ENCODE measurements at regions of chr20 and their contacts with region 1.

Region 1: GRCh38 chr20:22511943-22512910 is 72.1 kb downstream of the FOXA2 start:
- DNase-seq: peak; percentile 99
- ATAC-seq: peak; percentile 93
- H3K4me3 ChIP-seq: peak overlapping the region; percentile 0 to 47 (median 27); a peak in 4 of 6 replicates
- H3K27ac ChIP-seq: peak overlapping the region; percentile 92
- H3K4me1 ChIP-seq: peaks cover 94% of the 10 kb centered on the region
- H3K27me3 ChIP-seq: no peaks in the 10 kb centered on the region
- CTCF ChIP-seq: peak; percentile 46
- EP300 ChIP-seq: peak; percentile 68 to 99; a peak in 3 of 4 replicates
- POLR2A ChIP-seq: peak; percentile 83 to 93
- RAD21 ChIP-seq: peak; percentile 63

Region 2: GRCh38 chr20:22346716-22347115 is 165.5 kb before region 1 on chr20:
- CTCF ChIA-PET with region 1: no interaction called
- POLR2A ChIA-PET with region 1: no interaction called
- in situ Hi-C with region 1: no loop called
- intact Hi-C with region 1: no loop called
- DNase-seq: peak; percentile 18
- ATAC-seq: peak; percentile 53; the same call in 2 of the 3 replicates
- H3K4me3 ChIP-seq: no peak overlapping the region
- H3K27ac ChIP-seq: no peak overlapping the region
- H3K4me1 ChIP-seq: no peaks in the 10 kb centered on the region
- H3K27me3 ChIP-seq: peaks cover 0 to 41% of the 10 kb centered on the region in 2 experiments; a peak in 3 of 5 replicates
- CTCF ChIP-seq: no peak
- EP300 ChIP-seq: no peak
- POLR2A ChIP-seq: no peak
- RAD21 ChIP-seq: no peak

Region 3: DNA sequence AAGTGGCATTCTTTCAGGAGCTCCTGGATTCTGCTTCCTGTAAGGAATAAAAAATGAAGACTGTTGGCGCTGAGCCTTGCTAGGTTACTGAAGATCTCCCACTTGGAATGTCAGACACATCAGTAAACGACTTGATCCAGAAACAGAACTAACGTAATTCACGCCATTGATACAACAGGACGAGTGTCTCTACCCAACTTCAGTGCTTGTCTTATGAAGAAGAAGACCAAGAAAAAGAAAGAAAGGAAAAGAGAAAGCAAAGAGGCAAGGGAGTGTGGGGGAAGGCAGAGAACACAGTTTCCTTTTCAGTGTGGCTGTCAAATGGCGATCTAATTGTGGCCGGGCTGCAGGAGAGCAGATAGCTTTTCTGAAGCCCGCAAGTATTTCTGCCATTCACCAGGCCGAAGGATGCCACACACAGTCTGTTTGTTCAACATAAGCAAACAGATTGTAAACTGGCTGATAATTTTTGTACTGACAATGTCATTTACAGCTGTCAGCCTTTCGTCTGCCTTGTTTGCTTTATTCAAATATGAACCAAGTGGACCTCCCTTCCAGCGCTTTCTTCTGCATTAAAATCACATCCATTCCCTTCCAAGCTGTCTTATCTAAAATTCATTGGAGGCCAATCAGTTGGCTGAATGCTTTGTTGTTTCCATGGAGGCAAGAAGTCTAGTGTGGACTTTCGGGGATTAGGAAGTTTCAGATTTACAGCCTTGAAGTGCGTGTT is 108.4 kb before region 1 on chr20:
- CTCF ChIA-PET with region 1: no interaction called
- POLR2A ChIA-PET with region 1: interaction called, 13 read pairs
- in situ Hi-C with region 1: no loop called
- intact Hi-C with region 1: no loop called
- DNase-seq: peak; percentile 77
- ATAC-seq: peak; percentile 90
- H3K4me3 ChIP-seq: peak overlapping the region; percentile 47 to 69 (median 69)
- H3K27ac ChIP-seq: peak overlapping the region; percentile 17
- H3K4me1 ChIP-seq: peaks cover 47% of the 10 kb centered on the region
- H3K27me3 ChIP-seq: peaks cover 0 to 12% of the 10 kb centered on the region in 2 experiments; a peak in 3 of 5 replicates
- CTCF ChIP-seq: no peak
- EP300 ChIP-seq: 0 out of 4 replicates have a peak, but pooled peaks of 1 of the 2 experiments have one; percentile 33
- POLR2A ChIP-seq: no peak
- RAD21 ChIP-seq: 0 out of 2 replicates have a peak, but pooled peaks have one; percentile 7

Region 4: DNA sequence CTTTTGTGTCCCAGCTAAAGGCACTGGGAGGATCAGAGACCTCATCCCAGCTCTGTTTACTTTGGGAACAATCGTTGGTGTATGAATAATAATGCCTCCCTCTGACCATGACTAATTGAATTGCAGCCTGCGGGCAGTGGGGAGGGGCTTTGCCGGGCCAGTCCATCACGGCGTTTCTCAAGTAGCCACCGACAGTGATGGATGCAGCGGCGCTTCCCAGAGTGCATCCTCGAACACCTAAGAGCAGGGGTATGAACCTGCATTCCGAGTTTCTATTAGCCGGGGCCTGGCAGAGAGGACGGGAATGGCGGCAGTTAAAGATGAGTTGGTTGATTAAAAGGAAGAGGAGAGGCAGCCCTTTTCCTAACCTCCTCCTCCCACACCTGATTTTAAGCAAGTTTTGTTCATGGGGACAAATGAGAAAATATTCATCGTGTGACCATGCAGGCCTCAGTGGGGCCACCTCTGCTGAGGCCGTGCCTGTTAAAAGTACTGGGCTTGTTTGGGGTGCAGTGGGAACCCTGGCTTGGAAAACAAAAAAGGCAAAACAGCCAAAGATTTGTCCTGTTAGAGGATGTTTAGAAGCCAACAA is 82.0 kb before region 1 on chr20:
- CTCF ChIA-PET with region 1: no interaction called
- POLR2A ChIA-PET with region 1: interaction called, 39 read pairs
- in situ Hi-C with region 1: no loop called
- intact Hi-C with region 1: loop called (anchors 1 kb)
- DNase-seq: peak; percentile 92
- ATAC-seq: peak; percentile 67
- H3K4me3 ChIP-seq: peak overlapping the region; percentile 45 to 67 (median 67)
- H3K27ac ChIP-seq: peak overlapping the region; percentile 96
- H3K4me1 ChIP-seq: peaks cover 75% of the 10 kb centered on the region
- H3K27me3 ChIP-seq: no peaks in the 10 kb centered on the region; a peak in 1 of 5 replicates
- CTCF ChIP-seq: no peak
- EP300 ChIP-seq: peak; percentile 44 to 54; a peak in 3 of 4 replicates
- POLR2A ChIP-seq: peak; percentile 18 to 69
- RAD21 ChIP-seq: no peak

Region 5: GRCh38 chr20:22471156-22471844 is 40.9 kb before region 1 on chr20:
- CTCF ChIA-PET with region 1: no interaction called
- POLR2A ChIA-PET with region 1: interaction called, 16 read pairs
- in situ Hi-C with region 1: no loop called
- intact Hi-C with region 1: loop called (anchors 2 kb)
- DNase-seq: peak; percentile 72
- ATAC-seq: peak; percentile 44
- H3K4me3 ChIP-seq: peak overlapping the region in 1 of 3 experiments; percentile 4; a peak in 1 of 6 replicates
- H3K27ac ChIP-seq: peak overlapping the region; percentile 2
- H3K4me1 ChIP-seq: peaks cover 56% of the 10 kb centered on the region
- H3K27me3 ChIP-seq: peaks cover 7 to 17% of the 10 kb centered on the region in 2 experiments; a peak in 3 of 5 replicates
- CTCF ChIP-seq: no peak
- EP300 ChIP-seq: peak in 1 of 2 experiments; percentile 38; a peak in 1 of 4 replicates
- POLR2A ChIP-seq: no peak
- RAD21 ChIP-seq: no peak

Region 6: GRCh38 chr20:22499515-22500166 is 12.6 kb before region 1 on chr20:
- CTCF ChIA-PET with region 1: no interaction called
- POLR2A ChIA-PET with region 1: interaction called, 55 read pairs
- in situ Hi-C with region 1: no loop called
- intact Hi-C with region 1: no loop called
- DNase-seq: no peak
- ATAC-seq: no peak
- H3K4me3 ChIP-seq: no peak overlapping the region
- H3K27ac ChIP-seq: no peak overlapping the region
- H3K4me1 ChIP-seq: peaks cover 64% of the 10 kb centered on the region
- H3K27me3 ChIP-seq: no peaks in the 10 kb centered on the region
- CTCF ChIP-seq: no peak
- EP300 ChIP-seq: no peak
- POLR2A ChIP-seq: no peak
- RAD21 ChIP-seq: no peak

Region 7: DNA sequence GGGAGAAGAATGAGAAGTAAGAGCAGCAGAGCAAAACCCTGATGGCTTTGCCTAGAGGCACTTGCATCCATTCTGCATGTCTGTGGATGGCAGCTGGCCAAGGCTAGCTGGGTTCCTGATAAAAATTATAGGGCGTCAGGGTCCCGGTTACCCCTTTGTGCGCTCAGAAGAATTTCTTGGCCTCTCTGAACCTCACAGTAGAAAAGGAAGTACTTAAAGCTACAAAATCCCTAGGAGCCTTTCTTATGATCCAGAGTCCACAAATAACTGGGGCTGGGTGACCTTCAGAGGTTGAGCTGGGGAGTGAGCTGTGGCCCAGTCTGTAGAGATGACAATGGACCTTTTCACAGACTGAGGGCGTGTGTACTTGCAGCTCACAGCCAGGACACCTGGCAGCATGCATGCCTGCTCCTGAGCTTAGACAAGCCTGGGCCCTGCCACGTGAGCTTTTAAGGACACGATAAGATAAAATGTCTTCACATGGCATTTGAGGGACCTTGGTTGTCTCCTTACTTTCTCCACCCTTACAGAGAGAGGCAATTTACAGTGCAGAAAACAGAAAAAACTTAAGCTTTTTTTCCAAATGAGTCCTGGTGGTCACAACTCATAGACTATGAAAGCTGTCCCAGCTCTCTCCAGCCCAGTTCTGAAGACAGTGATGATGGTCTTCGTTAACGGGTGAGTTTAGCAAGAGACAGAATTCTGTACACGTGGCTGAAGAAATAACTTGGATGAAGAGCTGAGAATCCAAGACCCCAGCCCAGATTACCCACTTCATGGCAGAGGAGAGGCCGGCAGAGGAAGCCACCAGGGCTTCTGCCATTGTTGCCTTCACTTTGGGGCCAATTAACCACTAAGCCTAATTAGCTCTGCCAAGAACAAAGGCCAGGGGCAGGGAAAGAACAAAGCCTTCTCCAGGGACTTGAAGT is 21.9 kb after region 1 on chr20:
- CTCF ChIA-PET with region 1: no interaction called
- POLR2A ChIA-PET with region 1: interaction called, 501 read pairs
- in situ Hi-C with region 1: no loop called
- intact Hi-C with region 1: loop called (anchors 1 kb)
- DNase-seq: peak; percentile 97
- ATAC-seq: peak; percentile 98
- H3K4me3 ChIP-seq: no peak overlapping the region
- H3K27ac ChIP-seq: peak overlapping the region; percentile 77
- H3K4me1 ChIP-seq: peaks cover 89% of the 10 kb centered on the region
- H3K27me3 ChIP-seq: no peaks in the 10 kb centered on the region
- CTCF ChIP-seq: peak; percentile 48
- EP300 ChIP-seq: peak; percentile 80 to 89; a peak in 3 of 4 replicates
- POLR2A ChIP-seq: 0 out of 4 replicates have a peak, but pooled peaks have one; percentile 26 to 48
- RAD21 ChIP-seq: peak; percentile 56; the same call in 1 of the 2 replicates

Region 8: GRCh38 chr20:22575087-22575721 is 63.0 kb after region 1 on chr20:
- CTCF ChIA-PET with region 1: no interaction called
- POLR2A ChIA-PET with region 1: interaction called, 121 read pairs
- in situ Hi-C with region 1: loop called (anchors 5 kb)
- intact Hi-C with region 1: no loop called
- DNase-seq: peak; percentile 23
- ATAC-seq: no peak
- H3K4me3 ChIP-seq: peak overlapping the region in 2 of 3 experiments; percentile 32 to 95; a peak in 2 of 6 replicates
- H3K27ac ChIP-seq: peak overlapping the region; percentile 86
- H3K4me1 ChIP-seq: peaks cover 85% of the 10 kb centered on the region
- H3K27me3 ChIP-seq: no peaks in the 10 kb centered on the region; a peak in 1 of 5 replicates
- CTCF ChIP-seq: no peak
- EP300 ChIP-seq: no peak
- POLR2A ChIP-seq: no peak
- RAD21 ChIP-seq: no peak

Region 9: GRCh38 chr20:22611636-22612035 is 99.4 kb after region 1 on chr20:
- CTCF ChIA-PET with region 1: no interaction called
- POLR2A ChIA-PET with region 1: no interaction called
- in situ Hi-C with region 1: no loop called
- intact Hi-C with region 1: no loop called
- DNase-seq: no peak
- ATAC-seq: no peak
- H3K4me3 ChIP-seq: no peak overlapping the region
- H3K27ac ChIP-seq: no peak overlapping the region
- H3K4me1 ChIP-seq: no peaks in the 10 kb centered on the region
- H3K27me3 ChIP-seq: peaks cover 2 to 16% of the 10 kb centered on the region in 2 experiments; a peak in 3 of 5 replicates
- CTCF ChIP-seq: no peak
- EP300 ChIP-seq: no peak
- POLR2A ChIP-seq: no peak
- RAD21 ChIP-seq: no peak

Region 10: GRCh38 chr20:22663528-22664025 is 151.3 kb after region 1 on chr20:
- CTCF ChIA-PET with region 1: no interaction called
- POLR2A ChIA-PET with region 1: no interaction called
- in situ Hi-C with region 1: no loop called
- intact Hi-C with region 1: no loop called
- DNase-seq: no peak
- ATAC-seq: peak; percentile 35; the same call in 2 of the 3 replicates
- H3K4me3 ChIP-seq: no peak overlapping the region
- H3K27ac ChIP-seq: no peak overlapping the region
- H3K4me1 ChIP-seq: no peaks in the 10 kb centered on the region
- H3K27me3 ChIP-seq: peaks cover 3 to 22% of the 10 kb centered on the region in 2 experiments; a peak in 2 of 5 replicates
- CTCF ChIP-seq: no peak
- EP300 ChIP-seq: no peak
- POLR2A ChIP-seq: no peak
- RAD21 ChIP-seq: no peak